ENCODE measurements at regions of chr3 and their contacts with region 1.

Region 1: DNA sequence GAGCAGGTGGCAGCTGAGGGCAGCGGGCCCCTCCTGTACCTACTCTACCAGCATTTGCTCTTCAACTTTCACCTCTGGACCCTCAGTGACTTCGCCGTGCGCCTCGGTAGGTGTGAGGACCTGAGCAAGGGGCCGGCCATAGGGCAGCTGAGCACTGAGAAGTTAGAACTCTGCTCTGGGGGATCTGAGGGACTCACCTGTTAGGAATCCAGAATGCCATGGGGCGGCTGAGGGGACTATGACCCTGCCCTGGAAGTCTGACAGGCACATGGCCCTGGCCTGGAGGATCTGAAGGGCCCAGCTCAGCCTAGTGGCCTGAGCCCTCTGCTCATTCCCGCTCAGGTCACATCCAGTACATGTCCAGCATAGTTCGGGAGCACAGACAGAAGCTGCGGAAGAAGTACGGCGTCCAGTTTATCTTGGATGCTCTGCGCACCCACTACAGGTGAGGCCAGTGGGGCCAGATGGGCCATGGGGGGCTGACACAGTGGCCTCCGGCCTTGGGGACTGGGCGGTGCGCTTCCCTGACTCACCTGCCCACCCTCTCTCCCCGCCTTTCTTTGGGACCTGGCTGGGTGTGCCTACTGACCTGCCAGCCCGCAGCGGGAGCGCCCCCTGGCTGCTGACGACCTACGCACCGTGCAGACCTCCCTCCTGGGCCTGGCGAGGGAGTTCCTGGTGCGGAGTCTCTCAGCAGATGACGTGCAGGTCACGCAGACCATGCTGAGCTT is 18.8 kb downstream of the NBEAL2 start:
- DNase-seq: peak; percentile 84 to 88 (median 86)
- ATAC-seq: peak; percentile 92
- H3K4me3 ChIP-seq: no peak overlapping the region
- H3K27ac ChIP-seq: no peak overlapping the region
- H3K4me1 ChIP-seq: peaks cover 0 to 64% of the 10 kb centered on the region in 2 experiments; a peak in 2 of 5 replicates
- H3K27me3 ChIP-seq: no peaks in the 10 kb centered on the region
- CTCF ChIP-seq: peak; percentile 91 to 96 (median 95)
- EP300 ChIP-seq: no peak
- POLR2A ChIP-seq: no peak
- RAD21 ChIP-seq: peak; percentile 93 to 99

Region 2: GRCh38 chr3:46866720-46867549 is 131.4 kb before region 1 on chr3:
- CTCF ChIA-PET with region 1: interaction called, 6 read pairs
- POLR2A ChIA-PET with region 1: no interaction called
- in situ Hi-C with region 1: no loop called
- intact Hi-C with region 1: loop called (anchors 1 kb)
- DNase-seq: peak; percentile 80 to 91 (median 86)
- ATAC-seq: peak; percentile 86
- H3K4me3 ChIP-seq: no peak overlapping the region
- H3K27ac ChIP-seq: no peak overlapping the region
- H3K4me1 ChIP-seq: peaks cover 0 to 15% of the 10 kb centered on the region in 2 experiments; a peak in 2 of 5 replicates
- H3K27me3 ChIP-seq: peaks cover 8 to 50% of the 10 kb centered on the region in 2 experiments; a peak in 4 of 5 replicates
- CTCF ChIP-seq: peak; percentile 95 to 96 (median 96)
- EP300 ChIP-seq: no peak
- POLR2A ChIP-seq: no peak
- RAD21 ChIP-seq: peak; percentile 76 to 89

Region 3: GRCh38 chr3:46923559-46924350 is 74.5 kb before region 1 on chr3:
- CTCF ChIA-PET with region 1: interaction called, 33 read pairs
- POLR2A ChIA-PET with region 1: interaction called, 5 read pairs
- in situ Hi-C with region 1: no loop called
- intact Hi-C with region 1: loop called (anchors 1 kb)
- DNase-seq: peak; percentile 54 to 75 (median 60)
- ATAC-seq: peak; percentile 90
- H3K4me3 ChIP-seq: no peak overlapping the region
- H3K27ac ChIP-seq: no peak overlapping the region
- H3K4me1 ChIP-seq: no peaks in the 10 kb centered on the region
- H3K27me3 ChIP-seq: no peaks in the 10 kb centered on the region
- CTCF ChIP-seq: peak; percentile 78 to 85 (median 84)
- EP300 ChIP-seq: no peak
- POLR2A ChIP-seq: no peak
- RAD21 ChIP-seq: peak; percentile 75 to 91

Region 4: GRCh38 chr3:46935168-46935858 is 63.0 kb before region 1 on chr3:
- CTCF ChIA-PET with region 1: interaction called, 6 read pairs
- POLR2A ChIA-PET with region 1: interaction called, 6 read pairs
- in situ Hi-C with region 1: no loop called
- intact Hi-C with region 1: loop called (anchors 2 kb)
- DNase-seq: peak; percentile 84 to 88 (median 86)
- ATAC-seq: peak; percentile 81
- H3K4me3 ChIP-seq: no peak overlapping the region
- H3K27ac ChIP-seq: peak overlapping the region; percentile 42; the same call in 2 of the 3 replicates
- H3K4me1 ChIP-seq: peaks cover 39 to 40% of the 10 kb centered on the region in 2 experiments
- H3K27me3 ChIP-seq: no peaks in the 10 kb centered on the region
- CTCF ChIP-seq: peak; percentile 26 to 47 (median 44); a peak in 4 of 6 replicates
- EP300 ChIP-seq: peak; percentile 85
- POLR2A ChIP-seq: 0 out of 2 replicates have a peak, but pooled peaks have one; percentile 29
- RAD21 ChIP-seq: peak; percentile 14 to 31; a peak in 3 of 4 replicates

Region 5: DNA sequence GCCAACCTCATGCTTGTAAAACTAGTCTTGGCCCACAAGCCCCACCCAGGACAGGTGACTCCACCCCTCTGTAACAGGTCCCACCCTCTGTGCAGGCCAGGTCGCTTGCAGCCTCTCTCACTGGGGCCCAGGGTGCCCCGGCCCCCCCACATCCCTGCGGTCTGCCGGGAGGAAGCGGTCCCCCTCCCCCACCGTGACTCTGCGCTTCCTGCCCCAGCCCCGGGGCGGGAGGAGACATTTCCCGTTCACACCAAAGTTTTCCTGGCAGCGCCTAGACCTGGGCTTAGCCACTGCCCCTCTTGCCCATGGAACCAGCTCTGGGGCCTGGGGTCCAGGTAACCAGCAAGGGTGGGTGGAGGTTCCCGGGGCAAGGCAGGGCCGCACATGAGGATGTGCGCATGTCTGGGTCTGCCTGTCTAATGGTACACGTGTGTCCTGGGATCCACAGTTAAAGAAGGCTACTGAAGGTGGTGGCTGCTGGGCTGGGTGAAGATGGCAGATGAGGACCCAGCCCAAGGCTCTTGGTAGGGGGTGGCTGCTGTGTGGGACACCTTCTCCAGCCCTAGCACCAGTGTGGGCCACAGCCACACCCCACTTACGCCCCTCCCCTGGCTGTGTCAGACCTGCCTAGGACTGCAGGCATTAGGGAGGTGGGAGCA is 10.4 kb before region 1 on chr3:
- CTCF ChIA-PET with region 1: no interaction called
- POLR2A ChIA-PET with region 1: interaction called, 16 read pairs
- in situ Hi-C with region 1: no loop called
- intact Hi-C with region 1: no loop called
- DNase-seq: peak; percentile 97 to 99 (median 98)
- ATAC-seq: peak; percentile 95
- H3K4me3 ChIP-seq: peak overlapping the region; percentile 46
- H3K27ac ChIP-seq: peak overlapping the region; percentile 99
- H3K4me1 ChIP-seq: peaks cover 34 to 67% of the 10 kb centered on the region in 2 experiments
- H3K27me3 ChIP-seq: no peaks in the 10 kb centered on the region
- CTCF ChIP-seq: no peak
- EP300 ChIP-seq: peak; percentile 90
- POLR2A ChIP-seq: peak; percentile 88
- RAD21 ChIP-seq: peak in 1 of 2 experiments; percentile 26; a peak in 2 of 4 replicates